ENCODE measurements at regions of chr5 and their contacts with region 1.

Region 1: DNA sequence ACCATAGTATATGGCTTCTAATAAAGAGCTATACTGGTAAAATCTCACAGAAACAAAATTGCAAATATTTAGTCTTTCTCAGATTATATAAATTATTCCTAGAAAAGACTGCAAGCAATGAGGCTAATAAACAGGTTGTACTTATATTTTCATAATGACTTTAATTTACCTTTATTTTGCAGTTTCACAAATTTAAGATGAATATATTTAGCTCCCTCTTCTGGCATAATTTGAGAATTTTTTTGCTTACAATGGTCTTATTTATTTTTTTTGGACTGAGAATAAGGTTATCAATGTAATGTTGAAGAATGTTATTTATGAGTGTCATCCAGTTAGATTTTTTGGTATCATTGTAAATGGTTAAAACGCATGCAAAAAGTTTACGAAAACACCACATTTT is 56.7 kb downstream of the PIK3R1 start:
- DNase-seq: no peak
- ATAC-seq: no peak
- H3K4me3 ChIP-seq: no peak overlapping the region
- H3K27ac ChIP-seq: no peak overlapping the region
- H3K4me1 ChIP-seq: peaks cover 34% of the 10 kb centered on the region
- H3K27me3 ChIP-seq: no peaks in the 10 kb centered on the region
- CTCF ChIP-seq: peak in 1 of 3 experiments; percentile 11; a peak in 1 of 6 replicates
- EP300 ChIP-seq: no peak
- POLR2A ChIP-seq: no peak
- RAD21 ChIP-seq: no peak

Region 2: DNA sequence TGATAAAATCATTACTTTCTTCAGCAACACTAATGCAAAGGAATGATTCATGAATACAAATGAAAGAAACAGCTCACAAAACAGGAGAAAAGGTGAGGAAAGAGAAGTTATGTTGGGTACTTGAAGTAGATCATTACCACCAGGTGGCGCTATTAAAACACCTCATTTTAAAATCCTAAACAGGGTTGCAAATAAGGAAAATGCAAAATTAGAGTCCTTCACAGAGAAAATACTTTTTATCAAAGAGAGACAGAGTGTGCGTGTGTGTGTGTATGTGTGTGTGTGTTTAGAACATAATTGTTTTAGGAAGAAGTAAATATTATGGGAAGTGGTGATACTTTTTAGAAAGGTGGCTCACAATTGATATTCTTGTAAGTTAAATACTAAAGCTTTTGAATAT is 1026.2 kb before region 1 on chr5:
- CTCF ChIA-PET with region 1: interaction called, 63 read pairs
- POLR2A ChIA-PET with region 1: no interaction called
- RAD21 ChIA-PET with region 1: interaction called, 16 read pairs
- SMC1A ChIA-PET with region 1: interaction called, 55 read pairs
- in situ Hi-C with region 1: no loop called
- intact Hi-C with region 1: no loop called
- DNase-seq: peak; percentile 19
- ATAC-seq: peak; percentile 73
- H3K4me3 ChIP-seq: no peak overlapping the region
- H3K27ac ChIP-seq: no peak overlapping the region
- H3K4me1 ChIP-seq: no peaks in the 10 kb centered on the region
- H3K27me3 ChIP-seq: no peaks in the 10 kb centered on the region
- CTCF ChIP-seq: peak; percentile 52 to 65 (median 60); a peak in 5 of 6 replicates
- EP300 ChIP-seq: no peak
- POLR2A ChIP-seq: no peak
- RAD21 ChIP-seq: peak; percentile 83

Region 3: DNA sequence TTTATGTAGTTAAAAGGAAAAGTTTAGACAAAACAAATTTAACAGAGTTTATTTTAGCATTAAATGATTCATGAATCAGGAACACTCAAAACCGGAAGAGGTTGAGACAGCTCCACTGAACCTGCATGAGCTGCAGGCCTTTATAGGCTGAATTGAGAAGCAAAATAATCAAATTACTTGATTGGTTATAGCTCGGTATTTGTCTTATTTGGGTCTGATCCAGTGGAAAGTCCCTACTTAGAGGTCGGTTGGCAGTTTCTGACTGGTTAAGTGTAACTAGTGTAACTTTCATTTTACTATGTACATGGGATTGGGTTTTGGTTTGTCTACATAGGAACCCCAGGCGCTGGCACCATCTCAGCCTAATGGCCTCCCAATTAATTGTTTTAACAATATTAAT is 130.8 kb before region 1 on chr5:
- CTCF ChIA-PET with region 1: interaction called, 3 read pairs
- POLR2A ChIA-PET with region 1: no interaction called
- RAD21 ChIA-PET with region 1: interaction called, 3 read pairs
- SMC1A ChIA-PET with region 1: interaction called, 5 read pairs
- in situ Hi-C with region 1: no loop called
- intact Hi-C with region 1: loop called (anchors 5 kb)
- DNase-seq: peak; percentile 55
- ATAC-seq: peak; percentile 83
- H3K4me3 ChIP-seq: no peak overlapping the region
- H3K27ac ChIP-seq: peak overlapping the region; percentile 78
- H3K4me1 ChIP-seq: peaks cover 41% of the 10 kb centered on the region
- H3K27me3 ChIP-seq: no peaks in the 10 kb centered on the region
- CTCF ChIP-seq: no peak
- EP300 ChIP-seq: no peak
- POLR2A ChIP-seq: no peak
- RAD21 ChIP-seq: no peak

Region 4: DNA sequence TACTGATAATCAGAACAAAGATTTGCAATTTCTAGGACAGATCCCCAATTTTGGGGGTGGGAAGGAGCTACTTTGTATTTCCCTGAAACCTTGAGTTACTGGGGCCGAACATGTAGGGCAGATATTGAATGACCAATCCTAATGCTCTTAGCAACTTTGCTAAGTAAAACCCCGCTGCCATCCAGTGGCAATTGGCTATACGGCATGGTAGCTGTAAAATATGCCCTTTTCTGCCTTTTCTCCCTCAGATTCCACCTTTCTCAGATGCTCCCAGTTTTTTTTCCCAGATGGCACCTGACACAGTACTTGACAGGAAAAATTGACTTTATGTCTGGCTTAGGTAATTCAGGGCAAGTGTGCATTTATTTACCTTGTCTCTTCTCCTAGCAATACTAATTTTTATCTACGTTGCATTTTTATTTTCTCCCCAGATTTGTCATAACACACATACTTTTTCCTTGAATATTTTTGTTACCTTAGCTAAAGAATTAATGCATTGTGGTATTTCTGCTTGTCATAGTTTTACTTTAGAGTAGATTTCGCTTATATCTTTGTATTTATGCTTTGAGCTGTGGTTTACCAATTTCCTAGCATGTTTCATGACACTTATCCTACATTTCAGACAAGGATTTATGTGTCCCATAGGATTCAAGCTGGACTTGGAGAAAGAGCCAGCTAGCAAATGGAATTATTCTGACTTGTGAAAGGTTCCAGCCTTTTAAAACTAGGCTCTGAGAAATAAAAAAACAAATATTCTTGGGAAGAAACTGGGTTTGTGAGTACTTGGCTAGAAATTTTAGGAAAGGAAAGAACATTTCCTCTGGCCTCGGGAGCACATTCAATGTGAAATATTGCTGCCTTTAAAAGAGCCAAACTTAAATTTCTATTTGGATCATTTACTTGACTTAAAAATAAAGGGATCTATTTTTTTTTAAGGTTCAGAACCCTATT is 19.3 kb before region 1 on chr5:
- CTCF ChIA-PET with region 1: interaction called, 50 read pairs
- POLR2A ChIA-PET with region 1: interaction called, 6 read pairs
- RAD21 ChIA-PET with region 1: interaction called, 8 read pairs
- SMC1A ChIA-PET with region 1: interaction called, 118 read pairs
- in situ Hi-C with region 1: no loop called
- intact Hi-C with region 1: no loop called
- DNase-seq: no peak
- ATAC-seq: peak; percentile 89
- H3K4me3 ChIP-seq: no peak overlapping the region
- H3K27ac ChIP-seq: no peak overlapping the region
- H3K4me1 ChIP-seq: no peaks in the 10 kb centered on the region
- H3K27me3 ChIP-seq: no peaks in the 10 kb centered on the region
- CTCF ChIP-seq: peak; percentile 76 to 81 (median 78)
- EP300 ChIP-seq: no peak
- POLR2A ChIP-seq: no peak
- RAD21 ChIP-seq: peak; percentile 97

Region 5: DNA sequence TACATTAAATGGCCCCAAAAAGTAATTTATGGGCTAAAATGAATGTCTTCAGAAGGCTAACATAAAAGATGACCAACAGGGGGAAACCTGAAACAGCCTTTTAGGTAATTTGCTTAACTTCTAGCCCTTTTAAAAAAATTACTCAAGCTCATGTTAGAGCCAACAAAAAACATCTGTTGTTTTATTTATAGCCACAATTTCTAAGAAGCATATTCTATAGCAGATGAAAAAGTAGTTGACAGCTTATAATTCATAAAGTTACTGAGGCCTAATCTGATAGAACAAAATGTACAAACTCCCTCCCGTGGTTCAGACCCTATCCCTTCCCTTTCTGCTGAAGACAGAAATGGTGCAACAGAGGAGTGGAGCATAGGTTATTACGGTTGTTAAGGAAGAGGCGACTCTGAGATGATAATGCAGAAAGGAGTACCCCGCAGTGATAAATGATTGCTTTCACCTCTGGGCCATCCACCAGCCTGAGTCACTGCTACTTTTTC is 10.7 kb before region 1 on chr5:
- CTCF ChIA-PET with region 1: interaction called, 50 read pairs
- POLR2A ChIA-PET with region 1: interaction called, 3 read pairs
- RAD21 ChIA-PET with region 1: interaction called, 11 read pairs
- SMC1A ChIA-PET with region 1: interaction called, 118 read pairs
- in situ Hi-C with region 1: no loop called
- intact Hi-C with region 1: no loop called
- DNase-seq: no peak
- ATAC-seq: no peak
- H3K4me3 ChIP-seq: no peak overlapping the region
- H3K27ac ChIP-seq: no peak overlapping the region
- H3K4me1 ChIP-seq: no peaks in the 10 kb centered on the region
- H3K27me3 ChIP-seq: no peaks in the 10 kb centered on the region
- CTCF ChIP-seq: peak in 2 of 3 experiments; percentile 9 to 26; a peak in 1 of 6 replicates
- EP300 ChIP-seq: no peak
- POLR2A ChIP-seq: no peak
- RAD21 ChIP-seq: peak; percentile 59

Region 6: GRCh38 chr5:68343421-68343826 is 71.1 kb after region 1 on chr5:
- CTCF ChIA-PET with region 1: no interaction called
- POLR2A ChIA-PET with region 1: no interaction called
- RAD21 ChIA-PET with region 1: no interaction called
- SMC1A ChIA-PET with region 1: no interaction called
- in situ Hi-C with region 1: no loop called
- intact Hi-C with region 1: no loop called
- DNase-seq: peak; percentile 55
- ATAC-seq: peak; percentile 83
- H3K4me3 ChIP-seq: no peak overlapping the region
- H3K27ac ChIP-seq: no peak overlapping the region
- H3K4me1 ChIP-seq: peaks cover 21% of the 10 kb centered on the region
- H3K27me3 ChIP-seq: no peaks in the 10 kb centered on the region
- CTCF ChIP-seq: no peak
- EP300 ChIP-seq: no peak
- POLR2A ChIP-seq: no peak
- RAD21 ChIP-seq: no peak

Region 7: GRCh38 chr5:68644971-68645370 is 372.7 kb after region 1 on chr5:
- CTCF ChIA-PET with region 1: no interaction called
- POLR2A ChIA-PET with region 1: no interaction called
- RAD21 ChIA-PET with region 1: no interaction called
- SMC1A ChIA-PET with region 1: interaction called, 3 read pairs
- in situ Hi-C with region 1: loop called (anchors 10 kb)
- intact Hi-C with region 1: no loop called
- DNase-seq: peak; percentile 83
- ATAC-seq: peak; percentile 97
- H3K4me3 ChIP-seq: no peak overlapping the region
- H3K27ac ChIP-seq: no peak overlapping the region
- H3K4me1 ChIP-seq: peaks cover 13% of the 10 kb centered on the region; the same call in 1 of the 2 replicates
- H3K27me3 ChIP-seq: no peaks in the 10 kb centered on the region
- CTCF ChIP-seq: no peak
- EP300 ChIP-seq: peak; percentile 14 to 57; a peak in 2 of 4 replicates
- POLR2A ChIP-seq: no peak
- RAD21 ChIP-seq: peak; percentile 36

Region 8: GRCh38 chr5:68745448-68745847 is 473.2 kb after region 1 on chr5:
- CTCF ChIA-PET with region 1: no interaction called
- POLR2A ChIA-PET with region 1: no interaction called
- RAD21 ChIA-PET with region 1: no interaction called
- SMC1A ChIA-PET with region 1: no interaction called
- in situ Hi-C with region 1: no loop called
- intact Hi-C with region 1: loop called (anchors 10 kb)
- DNase-seq: no peak
- ATAC-seq: peak; percentile 49; the same call in 1 of the 3 replicates
- H3K4me3 ChIP-seq: no peak overlapping the region
- H3K27ac ChIP-seq: no peak overlapping the region
- H3K4me1 ChIP-seq: 0 out of 2 replicates have a peak, but pooled peaks cover 3% of the 10 kb centered on the region
- H3K27me3 ChIP-seq: no peaks in the 10 kb centered on the region; a peak in 1 of 4 replicates
- CTCF ChIP-seq: peak; percentile 32 to 40 (median 38); a peak in 4 of 6 replicates
- EP300 ChIP-seq: no peak
- POLR2A ChIP-seq: no peak
- RAD21 ChIP-seq: peak; percentile 36; the same call in 1 of the 2 replicates

Measured in GM12878 (cell line).